ENCODE measurements at regions of chr20 and their contacts with region 1.

Region 1: GRCh38 chr20:728248-728944 is 39.9 kb downstream of the SLC52A3 start:
- DNase-seq: peak; percentile 71 to 86
- H3K4me3 ChIP-seq: peak overlapping the region; percentile 55
- H3K4me3 Mint-ChIP-seq: peak overlapping the region; percentile 70
- H3K27ac Mint-ChIP-seq: no peak overlapping the region
- H3K4me1 ChIP-seq: no peaks in the 10 kb centered on the region; the same call in 1 of the 2 replicates
- H3K4me1 Mint-ChIP-seq: no peaks in the 10 kb centered on the region
- H3K27me3 ChIP-seq: no peaks in the 10 kb centered on the region; the same call in 1 of the 2 replicates
- H3K27me3 Mint-ChIP-seq: peaks cover 33% of the 10 kb centered on the region
- CTCF ChIP-seq: peak; percentile 74 to 90

Region 2: GRCh38 chr20:561437-562231 is 166.8 kb before region 1 on chr20:
- CTCF ChIA-PET with region 1: interaction called, 10 read pairs
- POLR2A ChIA-PET with region 1: no interaction called
- intact Hi-C with region 1: loop called (anchors 1 kb)
- DNase-seq: peak; percentile 77 to 79
- H3K4me3 ChIP-seq: no peak overlapping the region
- H3K4me3 Mint-ChIP-seq: no peak overlapping the region
- H3K27ac Mint-ChIP-seq: no peak overlapping the region
- H3K4me1 ChIP-seq: no peaks in the 10 kb centered on the region; the same call in 1 of the 2 replicates
- H3K4me1 Mint-ChIP-seq: no peaks in the 10 kb centered on the region
- H3K27me3 ChIP-seq: no peaks in the 10 kb centered on the region
- H3K27me3 Mint-ChIP-seq: peaks cover 4% of the 10 kb centered on the region
- CTCF ChIP-seq: peak; percentile 96 to 97

Region 3: GRCh38 chr20:844473-845225 is 116.3 kb after region 1 on chr20:
- CTCF ChIA-PET with region 1: no interaction called
- POLR2A ChIA-PET with region 1: no interaction called
- intact Hi-C with region 1: no loop called
- DNase-seq: peak; percentile 76 to 89
- H3K4me3 ChIP-seq: no peak overlapping the region
- H3K4me3 Mint-ChIP-seq: no peak overlapping the region
- H3K27ac Mint-ChIP-seq: no peak overlapping the region
- H3K4me1 ChIP-seq: peaks cover 19% of the 10 kb centered on the region
- H3K4me1 Mint-ChIP-seq: peaks cover 8% of the 10 kb centered on the region
- H3K27me3 ChIP-seq: no peaks in the 10 kb centered on the region
- H3K27me3 Mint-ChIP-seq: no peaks in the 10 kb centered on the region
- CTCF ChIP-seq: no peak